Cardiac septum (tissue), 1 donor: ENCODE measurements at regions of chr1 and their contacts with region 1.

Region 1: DNA sequence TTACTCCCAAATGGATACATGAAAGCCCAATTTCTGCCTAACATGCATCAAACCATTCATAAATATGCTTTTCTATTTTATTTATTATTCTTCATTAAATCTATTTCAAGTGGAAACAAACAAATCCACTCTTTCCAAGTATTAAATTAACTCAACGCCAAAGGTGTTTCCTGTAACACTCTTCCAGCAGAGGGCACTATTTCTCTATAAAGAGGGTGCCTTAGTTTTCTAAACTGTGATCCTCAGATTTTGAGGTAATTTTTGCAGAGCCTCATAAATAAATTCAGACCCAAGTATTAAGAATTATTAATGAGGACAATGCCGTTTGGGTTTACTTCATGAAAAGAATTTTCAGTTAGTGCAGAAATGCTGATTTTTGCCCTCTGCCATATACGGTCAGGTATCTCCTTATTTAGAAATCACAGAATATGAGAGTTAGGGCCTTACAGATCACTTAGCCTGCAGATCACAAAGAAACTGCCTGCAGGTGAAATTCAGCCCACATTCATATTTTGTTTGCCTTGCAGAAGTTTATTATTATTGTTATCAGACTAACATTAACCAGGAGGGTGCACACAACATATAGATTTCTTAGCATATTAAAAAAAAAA is 40.1 kb upstream of the MYSM1 start:
- DNase-seq: no peak

Region 2: DNA sequence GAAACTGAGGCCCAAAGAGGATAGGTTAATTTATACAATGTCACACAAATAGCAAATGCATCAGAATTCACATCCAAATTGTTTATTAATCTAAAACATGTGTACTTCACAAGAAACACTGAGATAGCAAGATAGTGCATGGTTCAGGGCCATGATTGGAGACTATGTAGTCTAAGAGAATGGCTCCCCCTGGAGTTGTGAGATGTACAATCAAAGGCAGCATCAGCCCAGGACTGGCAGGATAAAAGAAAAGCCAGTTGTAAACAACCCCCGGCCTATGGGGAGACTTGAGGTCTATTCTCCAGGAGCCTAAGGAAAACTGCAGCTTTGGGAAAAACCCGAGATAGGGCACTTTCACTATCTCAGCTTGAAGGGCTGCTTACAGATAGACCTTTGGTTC is 704.4 kb before region 1 on chr1:
- intact Hi-C with region 1: no loop called
- DNase-seq: no peak

Region 3: DNA sequence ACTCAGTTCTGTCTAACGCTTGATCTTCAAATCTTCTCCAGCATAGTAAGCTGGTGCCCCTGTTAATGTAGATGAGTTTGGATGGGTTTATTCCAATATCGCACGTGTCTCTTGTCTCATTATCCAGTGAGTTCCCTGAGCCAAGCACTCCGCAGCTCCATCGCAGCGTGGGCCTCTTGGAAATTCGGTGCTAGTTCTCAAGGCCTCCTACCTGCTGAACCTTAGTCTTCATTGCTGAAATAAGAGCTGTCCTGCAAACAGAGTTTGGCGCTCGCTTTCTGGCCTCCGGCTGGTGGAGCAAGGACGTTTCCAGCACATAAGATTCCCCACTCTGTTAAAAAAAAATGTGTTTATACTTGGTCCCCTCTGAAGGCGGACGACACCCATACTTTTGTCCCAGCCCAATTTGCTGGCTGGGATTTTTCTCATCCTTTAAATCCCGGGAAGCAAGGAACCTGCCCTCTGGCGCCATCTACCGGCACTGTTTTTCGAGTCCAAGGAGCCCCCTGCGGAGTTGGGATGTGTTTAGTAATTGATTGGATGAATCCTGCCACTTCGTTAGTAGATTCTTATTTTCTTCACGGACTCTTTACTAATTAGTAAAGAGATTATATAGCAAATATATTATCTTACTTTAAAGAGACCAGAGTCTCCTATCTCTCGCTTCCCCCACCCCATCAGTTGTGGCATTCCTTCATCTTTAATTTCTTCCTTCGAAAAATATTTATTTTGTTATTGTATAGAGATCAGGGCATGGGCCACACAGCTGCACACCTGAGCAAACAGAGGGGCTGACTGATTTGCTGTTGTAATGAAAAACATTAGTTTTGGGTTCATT is 29.2 kb after region 1 on chr1:
- intact Hi-C with region 1: loop called (anchors 1 kb)
- DNase-seq: peak; percentile 83

Region 4: GRCh38 chr1:59699227-59699847 is 959.4 kb after region 1 on chr1:
- intact Hi-C with region 1: loop called (anchors 2 kb)
- DNase-seq: no peak